H1 (cell line): ENCODE measurements at regions of chrX and their contacts with region 1.

Region 1: DNA sequence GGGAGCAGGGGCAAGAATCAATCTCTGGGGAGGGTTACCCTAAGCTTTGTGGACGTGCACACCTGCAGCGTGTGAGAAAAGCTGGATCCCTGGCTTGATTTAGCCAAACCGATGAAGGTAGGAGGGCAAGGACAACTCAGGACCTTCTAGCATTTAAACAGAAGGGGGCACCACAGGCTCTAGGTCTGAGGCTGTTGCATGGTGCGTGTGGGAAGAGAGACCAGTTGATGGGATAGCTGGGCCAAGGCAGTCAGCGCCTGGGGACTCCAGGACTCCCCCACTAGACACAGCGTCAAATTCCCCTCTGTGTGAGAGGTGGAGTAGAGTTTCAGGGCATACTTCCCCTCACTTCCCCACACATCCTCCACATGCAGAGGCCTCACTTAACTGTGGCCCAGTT is 4.3 kb downstream of the GABRQ start:
- DNase-seq: peak in 1 of 2 experiments; percentile 43
- H3K4me3 ChIP-seq: no peak overlapping the region
- H3K27ac ChIP-seq: no peak overlapping the region; the same call in 1 of the 2 replicates
- H3K4me1 ChIP-seq: peaks cover 6 to 20% (median 19%) of the 10 kb centered on the region in 4 experiments
- H3K27me3 ChIP-seq: peaks cover 0 to 13% (median 5%) of the 10 kb centered on the region in 4 experiments; a peak in 4 of 7 replicates
- CTCF ChIP-seq: peak; percentile 28 to 60 (median 46); a peak in 3 of 4 replicates
- EP300 ChIP-seq: no peak
- POLR2A ChIP-seq: no peak
- RAD21 ChIP-seq: peak; percentile 57 to 71

Region 2: DNA sequence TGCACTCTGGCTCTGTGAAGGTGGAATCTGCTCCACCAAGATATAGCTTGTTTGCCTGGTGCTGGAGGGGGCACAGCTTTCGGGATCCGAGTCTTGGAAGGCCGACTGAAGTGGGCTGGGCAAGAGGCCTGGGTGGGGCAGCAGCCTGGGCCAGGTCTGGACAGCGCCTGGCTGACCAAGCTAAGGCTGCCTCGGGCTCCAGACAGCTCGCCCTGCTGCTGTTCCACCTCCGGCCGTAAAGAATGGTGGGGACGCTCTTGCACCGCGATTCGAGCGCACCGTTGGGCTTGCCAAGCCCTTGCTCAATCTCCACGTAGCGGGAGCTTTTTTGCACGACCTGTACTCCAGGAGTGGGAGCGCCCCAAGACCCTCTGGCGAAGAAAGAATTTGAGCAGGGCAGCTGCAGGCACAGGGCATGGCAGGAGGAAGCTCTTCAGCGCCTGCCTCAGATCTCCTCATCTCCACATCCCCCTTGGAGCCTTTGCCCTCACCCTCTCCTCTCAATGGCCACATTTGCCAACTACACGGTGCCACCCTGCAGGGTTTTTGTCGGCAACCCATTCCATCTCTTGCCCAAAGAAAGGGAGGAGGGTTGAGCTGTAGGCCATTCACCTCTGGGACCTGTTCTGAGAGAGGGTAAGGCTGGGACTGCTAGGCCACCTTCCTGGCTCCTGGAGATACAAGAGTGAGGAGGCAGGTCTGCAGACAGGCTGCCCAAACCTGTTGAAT is 888.5 kb before region 1 on chrX:
- CTCF ChIA-PET with region 1: interaction called, 23 read pairs
- POLR2A ChIA-PET with region 1: no interaction called
- DNase-seq: peak in 1 of 2 experiments; percentile 64
- H3K4me3 ChIP-seq: no peak overlapping the region
- H3K27ac ChIP-seq: no peak overlapping the region
- H3K4me1 ChIP-seq: 0 out of 7 replicates have a peak, but pooled peaks cover 0 to 2% (median 0%) of the 10 kb centered on the region in 4 experiments
- H3K27me3 ChIP-seq: 0 out of 7 replicates have a peak, but pooled peaks cover 0 to 2% (median 0%) of the 10 kb centered on the region in 4 experiments
- CTCF ChIP-seq: peak; percentile 70 to 91 (median 77)
- EP300 ChIP-seq: no peak
- POLR2A ChIP-seq: no peak
- RAD21 ChIP-seq: peak; percentile 87 to 89

Region 3: GRCh38 chrX:152445926-152446325 is 196.1 kb before region 1 on chrX:
- CTCF ChIA-PET with region 1: no interaction called
- POLR2A ChIA-PET with region 1: no interaction called
- DNase-seq: no peak
- H3K4me3 ChIP-seq: no peak overlapping the region
- H3K27ac ChIP-seq: no peak overlapping the region
- H3K4me1 ChIP-seq: peaks cover 0 to 5% (median 4%) of the 10 kb centered on the region in 4 experiments; a peak in 5 of 7 replicates
- H3K27me3 ChIP-seq: no peaks in the 10 kb centered on the region
- CTCF ChIP-seq: no peak
- EP300 ChIP-seq: no peak
- POLR2A ChIP-seq: no peak
- RAD21 ChIP-seq: no peak

Region 4: DNA sequence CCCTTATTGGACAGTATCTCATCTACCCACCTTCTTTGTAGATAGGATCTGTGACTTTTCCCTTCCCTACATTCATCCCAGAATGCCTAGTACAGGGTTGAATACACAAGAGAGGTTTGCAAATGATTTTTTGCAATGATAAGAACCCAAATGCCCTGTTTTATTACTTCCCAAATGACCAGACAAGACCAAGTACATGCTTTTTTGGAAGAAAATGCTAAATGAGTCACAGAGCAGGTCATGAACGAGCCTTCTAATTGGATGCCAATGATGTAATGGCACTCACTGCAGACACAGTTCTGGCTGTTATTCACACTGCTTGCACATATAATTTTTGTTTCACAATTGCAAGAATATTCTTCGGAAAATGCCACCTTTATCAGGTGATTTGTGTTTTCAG is 22.1 kb before region 1 on chrX:
- CTCF ChIA-PET with region 1: no interaction called
- POLR2A ChIA-PET with region 1: no interaction called
- DNase-seq: no peak
- H3K4me3 ChIP-seq: no peak overlapping the region
- H3K27ac ChIP-seq: no peak overlapping the region
- H3K4me1 ChIP-seq: no peaks in the 10 kb centered on the region
- H3K27me3 ChIP-seq: no peaks in the 10 kb centered on the region
- CTCF ChIP-seq: no peak
- EP300 ChIP-seq: no peak
- POLR2A ChIP-seq: no peak
- RAD21 ChIP-seq: no peak

Region 5: DNA sequence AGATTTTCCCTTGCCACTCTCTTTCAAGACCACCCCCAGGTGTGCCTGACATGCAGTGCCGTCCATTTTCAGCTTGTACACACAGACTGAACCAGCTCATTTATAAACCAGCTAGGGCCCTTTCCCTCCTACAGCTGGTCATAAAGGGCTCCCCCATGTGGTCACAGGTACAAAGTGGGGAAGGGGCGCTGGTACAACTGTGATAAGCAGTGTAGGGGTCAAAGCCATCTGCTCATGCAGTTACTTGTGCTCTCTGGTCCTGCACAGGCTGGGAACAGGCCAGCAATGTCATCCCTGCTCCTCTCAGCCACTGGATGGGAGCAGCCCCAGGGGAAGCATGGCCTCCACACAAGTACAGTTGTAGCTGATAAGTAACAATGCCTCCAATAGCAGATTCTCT is 16.3 kb after region 1 on chrX:
- CTCF ChIA-PET with region 1: interaction called, 58 read pairs
- POLR2A ChIA-PET with region 1: no interaction called
- DNase-seq: peak in 1 of 2 experiments; percentile 48
- H3K4me3 ChIP-seq: no peak overlapping the region
- H3K27ac ChIP-seq: no peak overlapping the region
- H3K4me1 ChIP-seq: no peaks in the 10 kb centered on the region
- H3K27me3 ChIP-seq: no peaks in the 10 kb centered on the region
- CTCF ChIP-seq: peak; percentile 38 to 60 (median 59)
- EP300 ChIP-seq: no peak
- POLR2A ChIP-seq: no peak
- RAD21 ChIP-seq: peak; percentile 37 to 53; a peak in 3 of 4 replicates

Region 6: DNA sequence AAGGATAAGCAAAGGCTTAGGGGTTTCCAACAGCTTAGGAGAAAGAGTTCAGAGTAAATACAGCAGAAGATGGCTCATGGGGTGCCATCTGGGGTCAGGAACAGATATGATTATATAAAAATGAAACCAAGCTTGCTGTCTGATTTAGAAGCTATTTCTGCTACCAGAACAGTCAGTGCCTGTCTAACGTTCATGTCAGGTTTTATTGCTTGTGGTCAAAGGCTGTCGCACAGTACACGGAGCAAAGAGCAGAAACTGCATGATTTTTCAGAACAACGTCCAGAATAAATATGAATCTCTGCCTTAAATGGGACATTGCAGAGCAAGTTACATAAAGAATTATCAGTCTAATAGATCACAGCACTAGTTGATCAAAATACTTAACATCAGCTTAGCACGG is 171.2 kb after region 1 on chrX:
- CTCF ChIA-PET with region 1: interaction called, 39 read pairs
- POLR2A ChIA-PET with region 1: interaction called, 3 read pairs
- DNase-seq: no peak
- H3K4me3 ChIP-seq: no peak overlapping the region
- H3K27ac ChIP-seq: no peak overlapping the region
- H3K4me1 ChIP-seq: no peaks in the 10 kb centered on the region
- H3K27me3 ChIP-seq: no peaks in the 10 kb centered on the region
- CTCF ChIP-seq: no peak
- EP300 ChIP-seq: no peak
- POLR2A ChIP-seq: no peak
- RAD21 ChIP-seq: no peak

Region 7: DNA sequence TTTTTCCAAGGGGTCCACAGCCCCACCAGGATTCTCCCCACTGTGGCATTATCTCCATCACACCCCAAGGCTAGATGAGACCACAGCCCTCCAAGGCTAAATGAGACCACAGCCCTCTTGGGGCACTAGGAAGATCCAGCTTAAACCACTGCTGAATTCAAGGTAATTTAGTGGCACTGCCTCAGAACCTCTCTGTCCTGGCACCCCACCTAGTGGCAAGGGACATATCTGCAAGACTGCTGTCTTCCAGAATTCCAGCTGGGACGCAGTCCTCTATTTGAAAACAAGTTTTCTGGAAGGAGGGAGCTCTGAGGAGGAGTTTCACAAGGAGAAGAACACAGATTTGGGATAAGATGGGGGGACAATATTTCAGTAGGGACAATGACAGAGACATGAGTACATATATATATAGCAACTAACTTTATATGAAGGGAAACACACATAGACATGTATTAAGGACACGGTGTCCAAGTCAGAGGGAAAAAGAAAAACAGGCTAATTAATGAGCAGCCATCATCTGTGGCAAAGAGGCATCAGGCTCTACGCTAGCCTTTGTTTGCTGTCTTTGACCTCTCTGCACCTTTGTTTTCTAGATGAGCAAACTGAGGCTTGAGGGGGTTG is 179.3 kb after region 1 on chrX:
- CTCF ChIA-PET with region 1: interaction called, 39 read pairs
- POLR2A ChIA-PET with region 1: interaction called, 4 read pairs
- DNase-seq: peak; percentile 9 to 69
- H3K4me3 ChIP-seq: no peak overlapping the region
- H3K27ac ChIP-seq: no peak overlapping the region
- H3K4me1 ChIP-seq: no peaks in the 10 kb centered on the region
- H3K27me3 ChIP-seq: no peaks in the 10 kb centered on the region; a peak in 1 of 7 replicates
- CTCF ChIP-seq: peak; percentile 43 to 76 (median 67)
- EP300 ChIP-seq: no peak
- POLR2A ChIP-seq: no peak
- RAD21 ChIP-seq: peak; percentile 74 to 78